Psoas muscle (tissue), 8 donors: ENCODE measurements at regions of chr10 and their contacts with region 1.

Region 1: DNA sequence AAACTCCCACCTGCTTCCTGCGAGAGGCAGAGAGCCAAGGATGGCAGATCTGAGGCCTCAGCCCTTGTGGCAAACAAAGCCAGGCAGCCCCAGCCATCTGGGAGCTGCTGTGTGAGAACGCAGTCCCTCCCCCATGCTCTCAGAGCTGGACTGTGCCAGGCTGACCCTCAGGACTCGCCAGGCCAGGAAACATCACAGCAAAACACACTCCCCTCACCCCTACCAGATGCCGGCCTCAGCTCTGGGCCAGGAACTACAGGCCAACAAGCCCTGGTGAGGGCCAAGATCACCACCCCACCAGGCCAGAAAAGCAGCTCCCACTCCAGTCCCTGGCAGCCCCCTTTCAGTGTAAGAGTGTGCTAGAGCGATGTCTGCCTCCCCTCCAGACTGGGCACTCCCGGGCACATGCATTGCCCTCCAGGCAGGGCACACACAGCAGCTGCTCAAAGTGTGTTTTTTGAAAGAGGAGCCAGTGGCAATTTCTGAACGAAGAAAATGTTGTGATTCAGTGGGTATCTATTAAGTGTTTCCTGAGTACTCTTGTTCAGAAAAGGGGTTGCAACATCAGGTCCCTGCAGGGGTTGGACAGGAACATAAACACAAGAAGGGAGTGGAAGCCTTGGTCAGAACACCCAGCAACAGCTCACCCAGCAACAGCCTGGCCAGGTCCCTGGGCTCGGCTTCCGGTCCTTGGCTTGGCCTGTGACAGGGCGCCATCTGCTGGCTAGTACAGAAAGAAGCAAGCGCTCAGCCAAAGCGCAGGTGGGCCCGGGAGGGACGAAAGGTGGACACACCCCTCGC is 18.3 kb downstream of the LRRC20 start:
- DNase-seq: peak; percentile 90 to 96
- ATAC-seq: peak; percentile 96 to 99 (median 98)
- H3K4me3 ChIP-seq: peak overlapping the region; percentile 20
- H3K27ac ChIP-seq: peak overlapping the region; percentile 70
- H3K4me1 ChIP-seq: peaks cover 9% of the 10 kb centered on the region
- H3K27me3 ChIP-seq: no peaks in the 10 kb centered on the region
- CTCF ChIP-seq: peak; percentile 95

Region 2: DNA sequence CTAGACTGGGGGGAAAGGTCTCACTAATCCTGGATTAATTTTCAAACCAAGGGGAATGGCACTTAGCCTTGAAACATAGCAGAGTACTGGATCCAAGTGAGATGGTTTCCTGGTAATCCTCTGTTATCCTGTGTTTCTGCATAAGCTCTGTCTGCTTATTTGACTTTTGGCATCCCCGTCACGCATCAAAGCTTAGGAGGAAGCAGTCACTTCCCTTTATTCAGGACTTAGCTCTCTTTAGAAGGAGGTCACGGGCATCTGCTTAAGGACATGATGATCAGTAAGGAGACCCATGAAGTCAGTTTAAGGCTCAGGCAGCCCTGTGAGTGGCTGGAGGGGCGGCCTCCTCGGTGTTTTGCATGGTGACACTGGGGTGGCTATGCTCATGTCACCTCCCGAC is 882.9 kb before region 1 on chr10:
- intact Hi-C with region 1: no loop called
- DNase-seq: no peak
- ATAC-seq: no peak
- H3K4me3 ChIP-seq: no peak overlapping the region
- H3K27ac ChIP-seq: peak overlapping the region; percentile 89
- H3K4me1 ChIP-seq: peaks cover 73% of the 10 kb centered on the region
- H3K27me3 ChIP-seq: no peaks in the 10 kb centered on the region
- CTCF ChIP-seq: no peak

Region 3: DNA sequence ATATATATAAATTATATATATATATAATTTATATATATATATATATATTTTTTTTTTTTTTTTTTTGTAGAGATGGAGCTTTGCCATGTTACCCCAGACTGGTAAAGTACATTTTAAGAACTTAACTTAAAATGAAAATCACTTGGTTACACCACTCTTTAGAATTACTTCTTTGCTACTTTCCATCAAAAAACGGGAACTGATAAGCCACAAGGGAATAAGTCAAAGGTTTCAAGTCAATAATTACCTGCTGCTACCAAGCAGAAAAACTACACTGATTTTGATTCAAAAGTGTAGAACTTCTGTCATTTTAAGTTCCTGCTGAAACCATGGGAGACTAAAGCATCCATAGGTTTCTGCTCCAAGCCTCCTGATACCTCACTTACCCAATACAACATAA is 143.1 kb before region 1 on chr10:
- intact Hi-C with region 1: loop called (anchors 1 to 2 kb)
- DNase-seq: no peak
- ATAC-seq: peak in 1 of 4 donors; percentile 18
- H3K4me3 ChIP-seq: peak overlapping the region; percentile 35
- H3K27ac ChIP-seq: no peak overlapping the region
- H3K4me1 ChIP-seq: peaks cover 8% of the 10 kb centered on the region
- H3K27me3 ChIP-seq: no peaks in the 10 kb centered on the region
- CTCF ChIP-seq: no peak

Region 4: DNA sequence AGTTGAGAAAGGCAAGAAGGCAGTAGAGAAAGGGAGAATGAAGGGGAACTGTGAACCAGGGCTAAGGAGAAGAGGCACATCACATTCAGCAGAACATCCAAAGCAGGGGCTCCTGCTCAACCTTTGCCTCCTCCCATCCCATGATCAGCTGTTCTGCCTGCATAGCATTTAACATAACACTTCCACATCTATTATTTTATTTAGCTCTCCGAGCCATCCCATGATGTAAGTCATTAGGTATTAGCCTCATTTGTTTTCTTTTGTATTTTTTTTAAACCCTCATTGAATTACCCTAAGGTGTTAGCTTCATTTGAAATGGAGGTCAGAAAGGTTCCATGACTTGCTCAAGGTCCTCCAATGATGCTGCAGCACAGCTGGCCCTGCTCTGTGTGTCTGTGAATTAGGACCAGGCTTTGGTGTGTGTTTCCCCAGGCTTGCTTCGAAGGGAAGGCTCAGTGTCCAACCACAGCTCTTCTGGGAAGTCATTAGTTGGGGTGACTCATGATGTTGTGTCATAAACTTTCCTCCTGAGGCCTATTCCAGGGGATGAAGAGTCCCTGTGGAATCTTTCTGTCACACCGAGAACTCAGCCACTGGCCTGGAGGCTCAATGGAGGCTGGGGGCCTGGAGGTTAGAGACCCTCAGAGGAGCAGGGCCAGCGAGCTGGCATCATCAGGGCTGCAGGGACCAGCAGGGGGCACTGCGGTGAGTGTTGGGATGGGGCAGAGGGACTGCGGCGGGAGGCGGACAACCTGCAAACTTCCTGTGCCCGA is 96.8 kb before region 1 on chr10:
- intact Hi-C with region 1: loop called (anchors 5 kb)
- DNase-seq: no peak
- ATAC-seq: peak; percentile 69 to 87 (median 79)
- H3K4me3 ChIP-seq: no peak overlapping the region
- H3K27ac ChIP-seq: no peak overlapping the region
- H3K4me1 ChIP-seq: peaks cover 5% of the 10 kb centered on the region
- H3K27me3 ChIP-seq: no peaks in the 10 kb centered on the region
- CTCF ChIP-seq: no peak

Region 5: DNA sequence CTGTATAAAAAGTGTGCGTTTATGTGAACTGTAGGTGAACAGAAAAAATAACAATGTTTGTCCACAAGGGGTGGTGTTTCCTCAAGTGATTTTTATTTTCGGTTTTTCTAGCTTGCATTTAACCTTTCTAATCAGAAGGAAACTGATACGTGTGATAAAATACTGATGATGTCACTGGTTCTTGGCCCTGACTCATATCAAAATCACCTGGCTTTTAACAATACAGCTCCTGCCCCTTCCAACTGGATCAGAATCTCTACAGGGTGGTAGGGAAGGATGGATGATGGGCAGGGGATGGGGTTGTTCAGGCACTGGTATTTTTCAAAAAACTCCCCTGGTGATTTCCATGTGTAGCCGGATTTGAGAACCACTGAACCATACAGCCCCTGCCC is 91.2 kb before region 1 on chr10:
- intact Hi-C with region 1: loop called (anchors 5 kb)
- DNase-seq: no peak
- ATAC-seq: peak in 2 of 4 donors; percentile 28 to 72
- H3K4me3 ChIP-seq: no peak overlapping the region
- H3K27ac ChIP-seq: no peak overlapping the region
- H3K4me1 ChIP-seq: no peaks in the 10 kb centered on the region
- H3K27me3 ChIP-seq: no peaks in the 10 kb centered on the region
- CTCF ChIP-seq: peak; percentile 56